K562 (cell line): ENCODE measurements at regions of chr7 and their contacts with region 1.

Region 1: DNA sequence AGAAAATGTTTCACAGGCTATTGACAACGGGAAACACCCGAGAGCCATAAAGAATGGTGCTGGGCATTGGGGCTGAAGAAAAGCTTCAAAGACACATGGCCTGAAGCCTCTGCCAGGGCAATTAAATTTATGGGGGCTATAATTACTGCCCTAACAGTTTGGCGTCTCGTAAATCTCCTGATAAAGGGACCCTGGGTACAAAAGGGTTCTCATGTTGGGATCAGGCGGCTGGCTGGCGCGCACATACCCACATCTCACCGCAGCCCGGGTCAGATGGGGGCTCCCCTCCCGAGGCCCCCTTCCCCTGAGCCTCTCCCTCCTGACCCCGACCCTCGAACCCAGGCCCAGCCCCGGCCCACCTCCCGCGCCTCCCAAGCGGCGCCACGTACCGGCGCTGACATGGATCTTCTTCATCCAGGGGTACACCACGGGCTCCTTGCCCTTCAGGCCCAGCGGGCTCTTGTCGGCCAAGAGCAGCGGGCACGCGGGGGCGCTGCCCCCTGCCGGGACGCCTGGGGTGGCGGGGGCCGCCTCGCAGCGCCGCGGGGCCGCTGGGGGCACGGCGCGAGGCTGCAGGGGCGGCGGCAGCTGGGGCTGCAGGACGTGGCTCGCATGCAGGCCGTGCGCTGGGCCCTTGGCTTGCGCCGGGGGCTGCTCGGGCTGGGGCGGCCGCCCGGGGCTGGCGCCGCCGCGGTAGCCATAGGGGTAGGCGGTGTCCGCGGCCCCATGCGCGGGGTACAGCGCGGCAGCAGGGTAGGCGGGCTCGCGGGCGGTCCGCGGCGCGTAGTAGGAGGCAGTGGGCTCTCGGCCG is 623 bp downstream of the HOXA4 start:
- DNase-seq: no peak
- ATAC-seq: no peak
- H3K4me3 ChIP-seq: no peak overlapping the region
- H3K27ac ChIP-seq: no peak overlapping the region
- H3K4me1 ChIP-seq: no peaks in the 10 kb centered on the region
- H3K27me3 ChIP-seq: peaks cover 14 to 33% of the 10 kb centered on the region in 2 experiments
- CTCF ChIP-seq: no peak
- EP300 ChIP-seq: no peak
- POLR2A ChIP-seq: no peak
- RAD21 ChIP-seq: no peak

Region 2: GRCh38 chr7:27079234-27079975 is 50.5 kb before region 1 on chr7:
- CTCF ChIA-PET with region 1: no interaction called
- POLR2A ChIA-PET with region 1: no interaction called
- in situ Hi-C with region 1: loop called (anchors 5 kb)
- intact Hi-C with region 1: no loop called
- DNase-seq: no peak
- ATAC-seq: no peak
- H3K4me3 ChIP-seq: no peak overlapping the region
- H3K27ac ChIP-seq: no peak overlapping the region
- H3K4me1 ChIP-seq: no peaks in the 10 kb centered on the region
- H3K27me3 ChIP-seq: peaks cover 0 to 4% of the 10 kb centered on the region in 2 experiments; a peak in 1 of 5 replicates
- CTCF ChIP-seq: no peak
- EP300 ChIP-seq: no peak
- POLR2A ChIP-seq: no peak
- RAD21 ChIP-seq: no peak